GM10248 (cell line): ENCODE measurements at regions of chr10 and their contacts with region 1.

Region 1: GRCh38 chr10:14556285-14556956 is 218.3 kb downstream of the FAM107B start:
- DNase-seq: peak; percentile 69
- CTCF ChIP-seq: peak; percentile 39

Region 2: GRCh38 chr10:14439451-14440259 is 116.8 kb before region 1 on chr10:
- CTCF ChIA-PET with region 1: no interaction called
- POLR2A ChIA-PET with region 1: no interaction called
- DNase-seq: no peak
- CTCF ChIP-seq: no peak

Region 3: GRCh38 chr10:14571866-14572507 is 15.6 kb after region 1 on chr10:
- CTCF ChIA-PET with region 1: interaction called, 12 read pairs
- POLR2A ChIA-PET with region 1: no interaction called
- DNase-seq: no peak
- CTCF ChIP-seq: no peak